Body of pancreas (tissue), 4 donors: ENCODE measurements at regions of chr1 and their contacts with region 1.

Region 1: DNA sequence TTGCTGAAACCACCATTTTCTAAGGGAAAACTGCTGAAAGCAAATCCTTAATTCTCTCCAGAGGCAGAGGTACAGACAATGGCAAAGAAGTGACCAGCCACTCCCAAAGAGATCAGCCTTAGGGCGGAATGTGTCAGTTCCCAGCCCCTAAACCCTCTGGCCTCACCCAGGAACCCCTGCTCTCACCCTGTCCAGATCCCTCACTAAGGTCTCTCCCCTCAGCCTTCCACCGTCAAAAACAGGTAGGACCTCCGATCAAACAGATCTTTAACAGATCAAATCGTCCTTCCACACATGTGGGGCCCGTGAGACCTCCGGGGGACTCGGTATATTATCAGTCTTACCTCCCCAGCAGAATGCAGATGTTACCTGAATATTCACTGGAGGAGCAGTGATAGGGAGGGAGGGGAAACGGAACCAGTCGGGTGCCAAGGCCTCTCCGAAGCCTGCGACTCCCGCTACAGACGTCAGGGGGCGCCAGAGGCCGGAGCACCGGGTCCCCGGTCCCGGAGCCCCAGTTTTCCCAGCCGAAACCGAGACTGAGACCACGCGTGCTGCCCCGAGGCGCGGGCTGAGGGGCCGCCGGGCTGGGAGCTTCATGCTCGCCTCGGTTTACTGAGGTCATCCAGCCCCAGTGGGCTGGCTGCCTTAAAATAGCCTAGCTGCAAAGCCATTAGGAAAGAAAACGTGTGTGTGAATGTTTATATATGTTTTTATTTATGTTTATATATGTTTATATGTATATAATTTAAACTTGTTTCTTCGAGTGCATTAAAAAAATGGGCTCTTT is 23.6 kb downstream of the GPA33 start:
- DNase-seq: peak; percentile 75 to 82 (median 78)
- ATAC-seq: peak; percentile 83
- H3K4me3 ChIP-seq: no peak overlapping the region
- H3K27ac ChIP-seq: no peak overlapping the region
- H3K4me1 ChIP-seq: peaks cover 5% of the 10 kb centered on the region
- H3K27me3 ChIP-seq: no peaks in the 10 kb centered on the region
- CTCF ChIP-seq: peak; percentile 88 to 95 (median 90)
- POLR2A ChIP-seq: no peak

Region 2: DNA sequence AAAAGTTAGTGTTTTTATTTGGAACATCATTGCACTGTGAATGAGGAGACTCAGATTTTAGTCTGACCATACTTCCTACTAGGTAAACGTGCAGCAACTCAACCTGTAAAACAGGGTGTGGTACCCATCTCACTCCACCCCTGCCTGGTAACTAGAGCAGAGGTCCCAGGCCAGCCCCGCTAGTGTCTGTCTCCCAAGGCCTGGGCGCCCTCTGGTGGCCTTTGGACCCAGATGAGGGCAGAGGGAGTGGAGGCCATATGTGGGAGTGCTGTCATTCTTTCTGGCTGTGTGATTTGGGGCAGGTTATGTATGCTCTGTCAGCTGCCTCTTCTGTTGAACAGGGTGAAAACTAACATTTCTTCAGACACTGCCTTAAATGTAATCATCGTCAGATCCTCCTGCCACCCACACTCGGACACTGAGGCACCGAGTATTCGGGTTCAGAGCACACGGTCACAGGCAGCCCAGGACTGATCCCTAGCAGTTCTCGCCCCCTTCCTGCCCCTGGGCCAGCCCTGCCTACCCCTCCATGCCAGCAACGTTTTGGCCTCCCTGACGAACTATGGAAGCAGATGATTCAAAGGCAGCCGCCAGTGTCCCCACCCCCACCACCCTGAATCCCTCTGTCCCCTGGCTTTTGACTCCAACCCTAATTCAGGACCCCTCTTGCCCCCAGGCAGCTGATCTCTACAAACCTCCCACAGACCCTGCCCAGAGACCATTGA is 375.8 kb after region 1 on chr1:
- intact Hi-C with region 1: loop called (anchors 5 kb)
- DNase-seq: peak; percentile 83 to 89 (median 84)
- ATAC-seq: peak; percentile 83
- H3K4me3 ChIP-seq: no peak overlapping the region
- H3K27ac ChIP-seq: no peak overlapping the region
- H3K4me1 ChIP-seq: peaks cover 9% of the 10 kb centered on the region
- H3K27me3 ChIP-seq: no peaks in the 10 kb centered on the region
- CTCF ChIP-seq: peak; percentile 81 to 87 (median 84)
- POLR2A ChIP-seq: no peak

Region 3: DNA sequence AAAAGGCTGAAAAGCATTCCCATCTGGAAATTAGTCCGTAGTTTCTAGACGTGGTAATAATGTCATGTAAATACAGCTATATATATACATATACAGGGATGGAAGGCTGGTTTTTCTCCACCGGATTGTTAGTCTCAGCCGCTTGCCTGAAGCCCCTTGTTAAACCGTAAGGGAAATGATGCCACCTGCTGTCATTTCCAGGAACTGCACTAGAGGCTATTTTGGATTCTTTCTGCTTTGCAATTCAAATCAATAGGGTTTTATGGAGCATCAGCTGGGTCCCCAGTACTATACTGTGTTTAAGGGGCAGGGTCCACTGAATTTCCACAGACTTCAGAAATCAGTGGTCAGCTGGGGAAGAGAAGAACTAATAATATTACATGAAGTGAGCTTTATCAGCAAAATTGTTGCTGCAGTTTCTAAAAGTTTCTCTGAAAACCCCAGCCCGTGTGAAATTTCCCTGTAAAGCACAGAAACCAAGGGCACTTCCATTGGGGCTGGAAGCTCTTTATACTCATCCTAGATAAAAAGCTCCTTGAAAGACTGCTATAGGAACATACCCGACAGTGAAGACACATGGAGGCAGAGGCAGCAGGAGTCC is 621.5 kb after region 1 on chr1:
- intact Hi-C with region 1: loop called (anchors 10 kb)
- DNase-seq: peak; percentile 77 to 83 (median 82)
- ATAC-seq: peak; percentile 59
- H3K4me3 ChIP-seq: no peak overlapping the region
- H3K27ac ChIP-seq: no peak overlapping the region
- H3K4me1 ChIP-seq: no peaks in the 10 kb centered on the region
- H3K27me3 ChIP-seq: no peaks in the 10 kb centered on the region
- CTCF ChIP-seq: peak; percentile 59 to 94 (median 81)
- POLR2A ChIP-seq: no peak